ENCODE measurements at regions of chr15 and their contacts with region 1.

Region 1: GRCh38 chr15:94670438-94671034 is 439.2 kb downstream of the MCTP2 start:
- DNase-seq: no peak
- H3K4me3 ChIP-seq: no peak overlapping the region
- H3K27ac ChIP-seq: peak overlapping the region in 1 of 4 donors; percentile 32
- H3K4me1 ChIP-seq: peaks cover 0 to 6% (median 0%) of the 10 kb centered on the region in 4 donors
- H3K27me3 ChIP-seq: no peaks in the 10 kb centered on the region
- CTCF ChIP-seq: peak; percentile 66 to 76 (median 70)
- EP300 ChIP-seq: no peak
- POLR2A ChIP-seq: no peak

Region 2: DNA sequence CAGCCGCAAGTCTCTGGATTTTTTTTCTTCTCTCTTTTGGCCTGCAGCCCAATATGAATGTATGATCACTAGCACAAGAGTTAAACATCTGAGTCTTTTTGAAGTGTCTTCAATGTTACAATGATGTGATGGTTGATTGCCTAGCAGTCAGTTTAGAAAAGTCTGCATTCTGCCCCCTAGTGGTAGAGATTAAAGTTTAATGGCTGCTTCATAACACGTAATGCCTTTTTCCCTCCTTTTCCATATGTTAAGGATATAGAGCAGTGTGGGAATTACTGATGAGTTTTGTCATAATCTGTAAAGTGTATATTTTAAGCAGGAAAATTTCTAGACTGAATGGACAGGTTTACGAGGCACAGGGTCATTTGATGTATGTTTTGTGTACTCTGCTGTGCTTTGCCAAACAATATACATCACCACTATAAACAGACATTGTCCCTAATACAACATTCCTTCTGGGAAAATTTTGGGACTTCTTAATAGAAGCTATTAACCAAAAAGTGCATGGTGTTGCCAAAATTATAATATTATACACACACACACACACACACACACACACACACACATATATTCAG is 621.4 kb after region 1 on chr15:
- in situ Hi-C with region 1: loop called in 3 of 4 experiments (anchors 10 kb)
- intact Hi-C with region 1: no loop called
- DNase-seq: no peak
- H3K4me3 ChIP-seq: no peak overlapping the region
- H3K27ac ChIP-seq: no peak overlapping the region
- H3K4me1 ChIP-seq: peaks cover 0 to 17% (median 0%) of the 10 kb centered on the region in 4 donors
- H3K27me3 ChIP-seq: no peaks in the 10 kb centered on the region
- CTCF ChIP-seq: peak; percentile 55 to 74 (median 61)
- EP300 ChIP-seq: no peak
- POLR2A ChIP-seq: no peak

Region 3: DNA sequence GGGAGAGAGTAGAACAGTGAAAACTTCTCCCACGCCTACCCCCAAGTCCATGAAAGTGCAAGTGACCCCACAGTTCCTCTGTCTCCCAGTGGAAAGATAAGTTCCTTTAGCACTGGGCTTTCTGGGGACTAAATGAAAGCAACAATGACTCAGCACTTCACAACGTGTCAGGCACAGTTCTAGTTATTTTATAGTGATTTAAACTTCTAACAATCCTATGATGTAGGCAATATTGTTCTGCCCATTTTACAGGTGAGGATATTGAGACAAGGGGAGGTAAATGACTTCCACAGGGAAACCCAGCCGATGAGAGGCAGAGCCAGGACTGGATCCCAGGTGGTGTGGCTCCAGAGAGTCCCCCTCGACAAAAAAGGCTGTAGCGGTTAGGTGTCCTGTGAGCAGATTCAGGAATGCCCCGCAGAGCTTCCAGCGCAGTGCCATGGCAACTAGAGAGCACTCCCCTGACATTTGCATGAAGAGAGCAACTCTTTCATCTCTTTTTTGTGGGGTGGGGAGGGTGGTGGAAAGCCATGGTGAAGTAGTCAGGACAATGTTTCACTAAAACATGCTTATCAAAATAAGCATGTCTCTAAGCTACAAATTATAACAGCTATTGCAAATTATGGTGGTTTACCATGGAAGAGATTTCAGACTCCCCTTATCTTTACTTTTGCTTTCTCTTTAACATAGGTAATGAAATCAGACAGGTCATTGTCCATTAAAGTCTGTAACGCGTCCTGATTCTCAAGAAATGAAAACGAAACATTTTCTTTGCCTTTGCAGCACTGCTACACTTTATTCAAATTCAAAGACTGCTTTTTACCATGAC is 1722.1 kb after region 1 on chr15:
- in situ Hi-C with region 1: loop called in 1 of 4 experiments (anchors 25 kb)
- intact Hi-C with region 1: no loop called
- DNase-seq: no peak
- H3K4me3 ChIP-seq: no peak overlapping the region
- H3K27ac ChIP-seq: no peak overlapping the region
- H3K4me1 ChIP-seq: no peaks in the 10 kb centered on the region
- H3K27me3 ChIP-seq: no peaks in the 10 kb centered on the region
- CTCF ChIP-seq: no peak
- EP300 ChIP-seq: no peak
- POLR2A ChIP-seq: no peak